ENCODE measurements at regions of chr12 and their contacts with region 1.

Region 1: DNA sequence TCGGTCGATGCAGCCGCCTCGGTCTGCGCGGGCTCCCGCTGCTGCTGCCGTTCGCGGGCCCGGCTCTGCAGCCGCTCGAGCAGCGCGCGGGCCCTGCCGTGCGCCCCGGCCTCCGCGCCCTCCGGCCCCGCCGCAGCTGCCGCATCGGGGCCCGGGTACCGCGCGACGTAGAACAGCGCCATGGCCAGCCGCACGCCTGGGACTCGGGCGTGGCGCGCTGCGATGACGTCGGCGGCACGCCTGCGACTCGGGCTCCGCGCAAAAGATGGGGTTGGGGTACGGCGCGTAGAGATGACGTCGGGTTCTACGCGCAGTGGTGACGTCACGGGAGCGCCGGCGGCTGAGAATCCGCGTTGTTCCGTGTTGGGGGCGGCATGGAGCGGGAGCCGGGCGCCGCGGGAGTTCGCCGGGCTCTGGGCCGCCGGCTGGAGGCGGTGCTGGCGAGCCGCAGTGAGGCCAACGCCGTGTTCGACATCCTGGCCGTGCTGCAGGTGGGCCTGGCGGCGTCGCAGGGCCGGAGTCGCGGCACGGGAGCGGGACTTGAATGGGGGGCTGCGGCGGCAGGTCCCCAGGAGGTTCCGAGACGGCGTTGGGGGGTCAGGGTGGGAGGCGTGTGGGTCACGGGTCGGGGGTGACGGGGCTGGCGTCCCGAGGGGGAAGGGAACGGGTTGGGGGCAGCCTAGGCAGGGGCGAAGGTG is at the starts of genes DDX51 and NOC4L:
- DNase-seq: peak; percentile 94 to 95
- ATAC-seq: peak; percentile 85 to 96 (median 93)
- H3K4me3 ChIP-seq: peak within 1 kb of the TSS; percentile 65 to 99 (median 90)
- H3K27ac ChIP-seq: peak within 1 kb of the TSS in 9 of 10 donors; percentile 51 to 92 (median 82)
- H3K4me1 ChIP-seq: peaks cover 12 to 30% (median 23%) of the 10 kb centered on the region in 9 donors
- H3K27me3 ChIP-seq: no peaks in the 10 kb centered on the region
- CTCF ChIP-seq: peak in 1 of 9 donors; percentile 16
- total RNA-seq, gene DDX51: 7.2 to 11.1 (median 8.6) TPM
- total RNA-seq, gene NOC4L: 7.4 to 13.8 (median 9.0) TPM

Region 2: GRCh38 chr12:132083941-132084620 is 60.2 kb before region 1 on chr12:
- intact Hi-C with region 1: loop called in 1 of 10 experiments (anchors 5 kb)
- DNase-seq: peak; percentile 87 to 93
- ATAC-seq: peak; percentile 93 to 97 (median 95)
- H3K4me3 ChIP-seq: peak overlapping the region; percentile 72 to 99 (median 96)
- H3K27ac ChIP-seq: peak overlapping the region; percentile 47 to 96 (median 91)
- H3K4me1 ChIP-seq: peaks cover 0 to 48% (median 21%) of the 10 kb centered on the region in 9 donors
- H3K27me3 ChIP-seq: no peaks in the 10 kb centered on the region
- CTCF ChIP-seq: no peak

Region 3: DNA sequence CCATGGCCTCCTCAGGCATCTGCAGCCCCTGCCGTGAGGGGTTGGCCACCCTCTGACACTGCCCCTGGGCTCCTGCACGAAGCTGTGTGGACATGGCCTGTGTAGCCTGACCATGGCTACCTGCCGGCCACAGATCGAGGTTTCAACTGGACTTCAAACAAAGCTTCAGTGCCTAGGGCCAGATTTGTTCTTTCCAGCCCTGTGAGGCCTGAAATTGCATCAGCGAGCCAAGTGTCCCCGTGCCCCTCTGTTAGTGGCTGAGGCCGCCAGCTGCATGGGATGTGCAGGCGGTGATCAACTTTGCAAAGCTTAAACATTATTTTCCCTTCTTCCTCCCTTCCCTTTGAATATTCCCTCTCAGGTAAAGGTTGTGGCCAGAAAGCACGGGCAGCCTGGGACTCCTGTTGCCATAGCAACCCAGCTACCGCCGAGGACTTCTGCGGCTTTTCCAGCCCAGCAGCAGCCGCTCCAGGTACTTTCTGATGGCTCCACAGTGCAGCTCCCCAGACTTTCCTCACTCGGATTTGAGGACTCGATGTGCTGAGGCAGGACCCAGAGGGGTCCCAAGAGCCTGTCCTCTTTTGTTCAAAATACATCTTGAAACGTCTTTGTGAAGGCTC is 35.9 kb before region 1 on chr12:
- intact Hi-C with region 1: no loop called
- DNase-seq: no peak
- ATAC-seq: no peak
- H3K4me3 ChIP-seq: no peak overlapping the region
- H3K27ac ChIP-seq: no peak overlapping the region
- H3K4me1 ChIP-seq: no peaks in the 10 kb centered on the region
- H3K27me3 ChIP-seq: no peaks in the 10 kb centered on the region
- CTCF ChIP-seq: no peak

Measured in heart right ventricle (tissue), 16 donors.